Activated CD8-positive, alpha-beta memory T cell treated with anti-CD3 and anti-CD28 coated beads, Interleukin-2, amount 10 ng/mL, durations not matched to agents 7 days and 5 days (primary cell): ENCODE measurements at regions of chr15 and their contacts with region 1.

Region 1: DNA sequence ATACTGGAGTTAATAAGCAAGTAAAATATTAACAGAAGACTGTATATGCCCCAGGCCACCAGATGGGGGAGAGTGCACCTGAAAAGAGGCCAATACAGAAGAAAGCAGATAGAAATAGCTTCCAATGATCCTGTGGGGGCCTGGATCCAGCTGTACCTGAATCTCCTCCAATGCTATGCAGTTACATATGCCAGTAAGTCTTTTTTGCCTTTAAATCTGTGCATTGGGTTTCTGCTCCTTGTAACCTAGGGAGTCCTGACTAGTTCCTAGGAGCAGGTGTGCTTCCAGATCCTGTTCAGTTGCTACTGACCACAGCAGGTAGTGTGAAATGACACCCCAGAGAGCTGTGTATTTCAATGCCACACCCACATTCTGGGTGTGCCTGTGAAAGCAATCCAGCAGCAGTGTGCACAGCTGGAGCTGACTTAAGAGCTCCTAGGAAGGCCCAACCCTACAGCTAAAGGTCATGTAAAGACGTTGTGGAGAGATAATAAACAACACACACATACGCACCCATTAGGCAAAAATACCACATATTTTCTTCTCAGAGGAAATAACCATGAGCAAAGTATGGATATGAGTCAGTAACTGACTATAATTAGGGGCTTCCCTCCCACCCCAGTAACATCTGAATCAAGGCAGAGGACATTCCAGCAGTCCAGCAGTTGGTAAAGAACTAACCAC is 62.2 kb upstream of the AKAP13 start:
- DNase-seq: peak; percentile 80
- ATAC-seq: peak; percentile 84
- H3K4me3 Mint-ChIP-seq: peak overlapping the region; percentile 34
- H3K27ac Mint-ChIP-seq: peak overlapping the region; percentile 87
- H3K4me1 Mint-ChIP-seq: peaks cover 53% of the 10 kb centered on the region
- H3K27me3 Mint-ChIP-seq: no peaks in the 10 kb centered on the region

Region 2: DNA sequence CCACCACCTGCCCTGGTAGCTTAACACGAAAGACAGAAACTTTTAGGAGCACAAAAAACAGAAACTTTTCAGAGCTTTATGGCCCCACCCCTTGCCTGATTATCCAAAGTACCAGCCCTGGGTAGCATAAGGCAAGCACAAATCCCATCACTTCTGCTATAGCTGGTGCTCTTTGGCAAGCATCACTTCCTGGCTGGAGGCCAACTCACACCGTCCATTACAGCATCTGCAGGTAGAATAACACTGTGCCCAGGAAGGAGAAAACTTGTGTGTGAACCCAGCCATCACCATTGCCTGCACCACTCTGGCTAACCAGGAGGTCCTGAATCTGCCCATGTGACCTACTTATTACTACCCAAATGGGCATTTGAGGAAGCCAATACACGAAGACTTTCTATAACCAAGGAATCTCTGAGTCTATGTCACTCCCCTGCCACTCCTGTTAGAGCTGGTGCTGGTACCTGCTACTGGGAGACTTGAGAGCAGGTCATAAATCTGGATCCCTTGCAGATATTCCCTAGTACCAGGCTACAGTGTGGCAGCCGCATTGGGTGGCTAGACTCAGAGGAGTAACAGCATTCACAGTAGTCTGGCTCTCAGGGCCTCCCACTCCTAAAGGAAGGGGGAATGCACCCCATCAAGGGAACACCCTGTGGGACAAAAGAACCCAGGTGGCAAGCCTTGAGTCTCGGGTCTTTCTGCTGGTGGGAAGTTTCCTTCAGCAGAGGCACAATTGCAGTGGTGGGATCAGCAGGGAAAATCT is 11.1 kb before region 1 on chr15:
- CTCF ChIA-PET with region 1: interaction called, 22 read pairs
- DNase-seq: no peak
- ATAC-seq: no peak
- H3K4me3 Mint-ChIP-seq: no peak overlapping the region
- H3K27ac Mint-ChIP-seq: no peak overlapping the region
- H3K4me1 Mint-ChIP-seq: peaks cover 26% of the 10 kb centered on the region
- H3K27me3 Mint-ChIP-seq: no peaks in the 10 kb centered on the region

Region 3: DNA sequence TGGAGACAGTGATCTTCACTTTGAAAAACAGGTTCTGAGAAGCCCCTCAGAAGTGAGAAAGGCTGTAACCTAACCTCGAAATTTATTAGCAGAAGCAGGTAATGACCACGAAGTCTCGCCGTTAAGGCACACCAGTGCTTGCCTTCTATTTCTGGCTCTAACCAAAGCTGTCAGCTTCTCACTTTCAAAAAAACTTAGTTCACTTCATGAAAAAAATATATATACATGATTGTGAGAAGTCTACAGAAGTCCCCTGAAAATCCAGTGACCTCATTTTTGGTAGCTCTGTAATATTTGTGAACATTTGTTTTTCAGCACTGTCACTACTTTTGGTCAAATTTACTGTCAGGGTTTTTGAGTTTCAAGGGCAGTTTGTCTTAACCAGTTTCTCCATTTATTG is 43.1 kb after region 1 on chr15:
- CTCF ChIA-PET with region 1: no interaction called
- DNase-seq: no peak
- ATAC-seq: no peak
- H3K4me3 Mint-ChIP-seq: no peak overlapping the region
- H3K27ac Mint-ChIP-seq: no peak overlapping the region
- H3K4me1 Mint-ChIP-seq: peaks cover 26% of the 10 kb centered on the region
- H3K27me3 Mint-ChIP-seq: no peaks in the 10 kb centered on the region

Region 4: DNA sequence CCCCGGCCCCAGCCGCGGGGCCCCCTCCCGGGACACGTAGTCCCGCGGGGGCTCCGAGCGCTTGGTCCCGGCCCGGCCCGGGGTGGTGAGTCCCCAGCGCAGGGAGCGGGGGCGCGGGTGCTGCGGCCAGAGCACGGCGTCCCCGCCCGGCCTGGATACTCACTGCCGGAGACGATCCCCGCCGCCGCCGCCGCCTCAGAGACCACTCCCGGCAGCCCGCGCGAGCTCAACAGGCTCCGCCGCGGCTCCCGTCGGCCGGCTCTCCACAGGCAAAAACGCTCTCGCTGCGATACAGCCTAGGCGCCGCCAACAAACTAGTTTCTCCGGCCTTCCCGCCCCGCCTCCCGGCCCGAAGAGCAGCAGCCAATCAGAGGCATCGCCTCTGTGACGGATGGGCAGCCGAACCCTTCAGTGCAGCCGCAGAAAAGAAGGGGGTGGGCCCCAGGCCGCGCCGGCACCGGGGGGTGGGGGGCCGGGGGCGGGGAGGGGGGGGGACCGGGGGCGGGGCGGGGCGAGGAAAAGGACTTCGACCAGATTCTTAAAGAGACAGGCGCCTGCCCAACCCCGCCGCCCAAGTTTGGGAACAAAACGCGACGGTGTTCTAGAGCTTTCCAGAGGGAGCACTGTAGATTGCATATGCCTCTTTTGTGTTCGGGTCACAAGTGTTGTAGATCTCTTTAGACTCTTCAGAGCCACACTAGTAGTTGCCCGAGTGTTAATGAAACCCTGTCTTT is 476.6 kb after region 1 on chr15 and contains the start of gene KLHL25:
- CTCF ChIA-PET with region 1: no interaction called
- DNase-seq: peak; percentile 95
- ATAC-seq: peak; percentile 98
- H3K4me3 Mint-ChIP-seq: peak within 1 kb of the TSS; percentile 80
- H3K27ac Mint-ChIP-seq: peak within 1 kb of the TSS; percentile 80
- H3K4me1 Mint-ChIP-seq: peaks cover 19% of the 10 kb centered on the region
- H3K27me3 Mint-ChIP-seq: no peaks in the 10 kb centered on the region
- total RNA-seq, gene KLHL25: 4.3 to 4.5 TPM